Activated CD8-positive, alpha-beta T cell treated with anti-CD3 and anti-CD28 coated beads, Interleukin-2, amount 10 ng/mL, durations not matched to agents 7 days and 5 days (primary cell): ENCODE measurements at regions of chr15 and their contacts with region 1.

Region 1: DNA sequence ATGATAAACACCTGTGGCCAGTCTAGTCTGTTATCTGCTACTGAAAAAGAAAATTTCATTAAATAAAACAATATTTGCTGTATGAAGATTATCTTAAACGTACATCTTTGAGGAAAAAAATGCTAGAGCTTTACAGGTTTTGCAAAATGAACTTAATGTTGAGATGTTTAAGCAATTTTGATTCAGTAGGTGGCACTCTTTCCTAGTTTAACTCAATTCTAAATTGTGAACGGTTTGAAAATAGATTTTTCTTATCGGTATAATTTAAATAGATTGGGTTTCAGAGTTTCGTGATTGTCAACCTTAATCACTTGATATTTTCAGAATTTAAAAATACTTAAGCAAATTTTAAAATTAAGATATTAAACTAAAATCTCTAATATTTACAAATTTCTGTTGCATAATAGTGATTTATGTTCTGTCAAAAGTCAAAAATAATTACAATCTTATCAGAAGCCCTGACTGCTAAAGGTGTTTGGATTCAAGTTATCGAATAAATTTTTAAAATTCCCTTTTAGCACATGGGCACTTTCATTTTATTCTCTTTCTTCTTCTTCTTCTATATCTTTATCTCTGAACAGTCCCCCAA is 7.0 kb upstream of the RNF111 start:
- DNase-seq: no peak
- ATAC-seq: no peak
- H3K4me3 Mint-ChIP-seq: no peak overlapping the region
- H3K27ac Mint-ChIP-seq: no peak overlapping the region
- H3K4me1 Mint-ChIP-seq: peaks cover 54% of the 10 kb centered on the region
- H3K27me3 Mint-ChIP-seq: peaks cover 4% of the 10 kb centered on the region

Region 2: GRCh38 chr15:58966698-58967097 is 13.7 kb before region 1 on chr15:
- CTCF ChIA-PET with region 1: interaction called, 10 read pairs
- POLR2A ChIA-PET with region 1: interaction called, 3 read pairs
- DNase-seq: no peak
- ATAC-seq: no peak
- H3K4me3 Mint-ChIP-seq: no peak overlapping the region
- H3K27ac Mint-ChIP-seq: no peak overlapping the region
- H3K4me1 Mint-ChIP-seq: no peaks in the 10 kb centered on the region
- H3K27me3 Mint-ChIP-seq: peaks cover 4% of the 10 kb centered on the region

Region 3: GRCh38 chr15:59028387-59028955 is 48.0 kb after region 1 on chr15:
- CTCF ChIA-PET with region 1: no interaction called
- POLR2A ChIA-PET with region 1: no interaction called
- DNase-seq: no peak
- ATAC-seq: no peak
- H3K4me3 Mint-ChIP-seq: no peak overlapping the region
- H3K27ac Mint-ChIP-seq: no peak overlapping the region
- H3K4me1 Mint-ChIP-seq: peaks cover 10% of the 10 kb centered on the region
- H3K27me3 Mint-ChIP-seq: no peaks in the 10 kb centered on the region

Region 4: DNA sequence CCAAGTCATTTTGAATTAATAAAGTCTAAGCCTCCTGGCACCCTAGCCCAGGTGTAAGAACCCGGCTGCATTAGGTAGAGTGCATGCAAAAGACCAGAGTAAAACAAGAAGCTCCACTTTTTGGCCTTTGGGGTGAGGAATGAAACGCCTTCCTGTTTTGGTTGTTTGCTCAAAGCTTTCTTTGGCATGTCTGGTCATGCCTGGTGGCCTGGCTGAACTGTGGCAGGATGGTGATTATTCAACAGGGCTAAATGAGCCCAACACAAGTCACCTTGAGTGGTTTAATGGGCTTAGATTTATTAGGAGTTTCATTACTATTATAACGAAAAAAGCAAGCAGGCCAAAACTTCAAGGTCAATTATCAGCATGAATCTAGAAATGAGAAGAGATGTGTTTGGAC is 185.3 kb after region 1 on chr15:
- CTCF ChIA-PET with region 1: interaction called, 11 read pairs
- POLR2A ChIA-PET with region 1: no interaction called
- DNase-seq: peak; percentile 38
- ATAC-seq: no peak
- H3K4me3 Mint-ChIP-seq: no peak overlapping the region
- H3K27ac Mint-ChIP-seq: peak overlapping the region; percentile 48
- H3K4me1 Mint-ChIP-seq: peaks cover 52% of the 10 kb centered on the region
- H3K27me3 Mint-ChIP-seq: no peaks in the 10 kb centered on the region